ENCODE measurements at regions of chr9 and their contacts with region 1.

Region 1: GRCh38 chr9:22425551-22425950 is 21.1 kb upstream of the DMRTA1 start:
- DNase-seq: no peak
- H3K4me3 ChIP-seq: no peak overlapping the region
- H3K27ac ChIP-seq: no peak overlapping the region
- H3K4me1 ChIP-seq: no peaks in the 10 kb centered on the region
- H3K27me3 ChIP-seq: peaks cover 0 to 5% (median 0%) of the 10 kb centered on the region in 7 donors
- CTCF ChIP-seq: no peak
- POLR2A ChIP-seq: no peak

Region 2: GRCh38 chr9:22354699-22355384 is 70.7 kb before region 1 on chr9:
- intact Hi-C with region 1: no loop called
- DNase-seq: no peak
- H3K4me3 ChIP-seq: no peak overlapping the region
- H3K27ac ChIP-seq: no peak overlapping the region
- H3K4me1 ChIP-seq: no peaks in the 10 kb centered on the region
- H3K27me3 ChIP-seq: no peaks in the 10 kb centered on the region
- CTCF ChIP-seq: no peak
- POLR2A ChIP-seq: no peak

Region 3: DNA sequence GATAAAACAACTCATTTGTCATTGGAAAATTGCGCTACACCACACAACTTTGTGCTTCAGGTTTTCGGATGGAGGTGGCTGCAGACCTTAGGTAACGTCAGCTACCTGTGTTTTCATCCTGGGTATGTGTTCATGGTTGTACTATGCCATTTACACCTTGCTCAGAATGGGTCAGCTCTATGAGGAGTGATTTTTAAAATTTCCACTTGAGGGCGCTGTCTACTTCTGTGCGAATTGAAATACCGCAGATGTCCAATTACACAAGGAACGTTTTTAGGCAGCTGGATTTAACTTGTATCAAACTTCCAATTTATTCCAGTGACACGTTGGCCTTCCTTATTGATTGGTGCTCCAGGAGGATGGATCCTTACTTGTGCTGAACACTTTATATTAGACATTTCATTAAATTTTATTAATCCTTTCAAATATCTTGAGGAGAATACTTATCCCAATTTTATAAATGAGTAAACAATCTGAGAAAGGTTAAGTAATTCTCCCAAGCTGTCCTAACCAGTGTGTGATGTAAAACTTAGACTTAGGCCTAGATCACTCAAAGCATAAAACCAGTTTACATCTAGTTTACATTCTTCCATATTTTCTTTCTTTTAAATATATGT is 44.5 kb after region 1 on chr9:
- intact Hi-C with region 1: loop called (anchors 10 kb)
- DNase-seq: no peak
- H3K4me3 ChIP-seq: no peak overlapping the region
- H3K27ac ChIP-seq: no peak overlapping the region
- H3K4me1 ChIP-seq: no peaks in the 10 kb centered on the region
- H3K27me3 ChIP-seq: no peaks in the 10 kb centered on the region
- CTCF ChIP-seq: peak in 7 of 11 experiments; percentile 14 to 41 (median 26)
- POLR2A ChIP-seq: no peak

Region 4: DNA sequence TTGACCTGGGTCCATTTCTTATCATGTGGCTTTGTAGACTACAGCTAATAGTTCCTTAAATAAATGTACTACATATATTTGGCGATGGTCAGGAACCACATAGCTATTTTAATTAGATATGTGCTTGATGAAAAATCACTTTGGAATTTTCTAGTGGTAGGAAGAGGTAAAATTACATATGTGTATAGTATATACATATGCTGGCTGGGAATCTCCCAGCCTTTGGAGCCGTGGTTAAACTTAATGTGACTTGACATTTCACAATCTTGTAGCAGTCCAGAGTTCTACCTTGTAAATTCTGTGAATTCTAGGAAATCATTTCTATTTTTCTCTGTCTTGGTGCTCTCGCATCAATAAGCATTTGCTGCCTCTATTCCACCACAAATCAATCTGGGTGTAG is 586.1 kb after region 1 on chr9:
- intact Hi-C with region 1: no loop called
- DNase-seq: no peak
- H3K4me3 ChIP-seq: no peak overlapping the region
- H3K27ac ChIP-seq: no peak overlapping the region
- H3K4me1 ChIP-seq: no peaks in the 10 kb centered on the region
- H3K27me3 ChIP-seq: no peaks in the 10 kb centered on the region
- CTCF ChIP-seq: no peak
- POLR2A ChIP-seq: no peak